ENCODE measurements at regions of chr20 and their contacts with region 1.

Region 1: DNA sequence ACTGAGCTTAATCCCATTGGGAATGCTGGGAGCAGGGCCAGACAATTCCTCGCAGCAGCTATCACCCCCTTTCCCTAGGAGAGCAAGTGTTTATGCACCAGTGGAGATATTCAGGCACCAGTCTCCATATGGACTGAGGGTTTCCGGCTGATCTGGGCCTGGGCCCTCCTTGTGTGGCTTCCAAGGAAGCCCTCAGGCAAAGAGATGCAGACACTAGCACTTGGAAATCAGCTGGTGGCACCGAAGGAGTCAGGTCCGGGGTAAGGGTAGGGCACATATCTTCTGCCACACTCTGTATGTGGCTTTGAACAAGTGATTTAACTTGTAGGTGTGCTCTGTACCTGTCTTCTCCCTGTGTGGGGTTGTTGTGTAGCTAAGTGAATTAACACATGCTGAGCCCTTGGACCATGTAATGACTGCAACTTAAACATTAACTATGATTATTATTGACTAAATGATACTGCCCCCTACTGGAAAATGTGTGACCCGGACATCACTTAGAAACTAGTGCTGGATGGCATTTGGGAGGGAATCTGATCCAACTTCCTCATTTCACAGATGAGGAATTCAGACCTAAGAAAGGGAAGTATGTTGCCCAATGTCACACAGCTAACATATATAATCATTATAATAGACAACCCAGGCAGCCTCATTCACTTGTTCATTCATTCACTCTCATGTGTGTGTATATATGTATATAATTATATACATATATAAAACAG is 19.3 kb upstream of the WFDC2 start:
- DNase-seq: peak in 2 of 4 donors; percentile 30 to 52
- ATAC-seq: peak; percentile 60
- H3K4me3 ChIP-seq: no peak overlapping the region
- H3K27ac ChIP-seq: no peak overlapping the region
- H3K4me1 ChIP-seq: no peaks in the 10 kb centered on the region
- H3K27me3 ChIP-seq: no peaks in the 10 kb centered on the region
- CTCF ChIP-seq: peak in 6 of 7 experiments; percentile 42 to 69 (median 61)
- POLR2A ChIP-seq: no peak

Region 2: GRCh38 chr20:45695496-45695895 is 245.2 kb after region 1 on chr20:
- intact Hi-C with region 1: no loop called
- DNase-seq: no peak
- ATAC-seq: no peak
- H3K4me3 ChIP-seq: no peak overlapping the region
- H3K27ac ChIP-seq: no peak overlapping the region
- H3K4me1 ChIP-seq: no peaks in the 10 kb centered on the region
- H3K27me3 ChIP-seq: no peaks in the 10 kb centered on the region
- CTCF ChIP-seq: no peak
- POLR2A ChIP-seq: no peak

Region 3: GRCh38 chr20:45765980-45766379 is 315.7 kb after region 1 on chr20:
- intact Hi-C with region 1: loop called (anchors 10 kb)
- DNase-seq: no peak
- ATAC-seq: no peak
- H3K4me3 ChIP-seq: no peak overlapping the region
- H3K27ac ChIP-seq: no peak overlapping the region
- H3K4me1 ChIP-seq: peaks cover 5% of the 10 kb centered on the region
- H3K27me3 ChIP-seq: no peaks in the 10 kb centered on the region
- CTCF ChIP-seq: no peak
- POLR2A ChIP-seq: no peak

Measured in body of pancreas (tissue), 4 donors.